Activated CD4-positive, alpha-beta T cell treated with anti-CD3 and anti-CD28 coated beads for 36 hours (primary cell): ENCODE measurements at regions of chr19 and their contacts with region 1.

Region 1: GRCh38 chr19:13277104-13277809 is 127.0 kb downstream of the IER2 start:
- DNase-seq: peak; percentile 76
- ATAC-seq: peak; percentile 96
- H3K4me3 Mint-ChIP-seq: no peak overlapping the region
- H3K27ac Mint-ChIP-seq: peak overlapping the region; percentile 86
- H3K4me1 Mint-ChIP-seq: peaks cover 13% of the 10 kb centered on the region
- H3K27me3 Mint-ChIP-seq: no peaks in the 10 kb centered on the region

Region 2: DNA sequence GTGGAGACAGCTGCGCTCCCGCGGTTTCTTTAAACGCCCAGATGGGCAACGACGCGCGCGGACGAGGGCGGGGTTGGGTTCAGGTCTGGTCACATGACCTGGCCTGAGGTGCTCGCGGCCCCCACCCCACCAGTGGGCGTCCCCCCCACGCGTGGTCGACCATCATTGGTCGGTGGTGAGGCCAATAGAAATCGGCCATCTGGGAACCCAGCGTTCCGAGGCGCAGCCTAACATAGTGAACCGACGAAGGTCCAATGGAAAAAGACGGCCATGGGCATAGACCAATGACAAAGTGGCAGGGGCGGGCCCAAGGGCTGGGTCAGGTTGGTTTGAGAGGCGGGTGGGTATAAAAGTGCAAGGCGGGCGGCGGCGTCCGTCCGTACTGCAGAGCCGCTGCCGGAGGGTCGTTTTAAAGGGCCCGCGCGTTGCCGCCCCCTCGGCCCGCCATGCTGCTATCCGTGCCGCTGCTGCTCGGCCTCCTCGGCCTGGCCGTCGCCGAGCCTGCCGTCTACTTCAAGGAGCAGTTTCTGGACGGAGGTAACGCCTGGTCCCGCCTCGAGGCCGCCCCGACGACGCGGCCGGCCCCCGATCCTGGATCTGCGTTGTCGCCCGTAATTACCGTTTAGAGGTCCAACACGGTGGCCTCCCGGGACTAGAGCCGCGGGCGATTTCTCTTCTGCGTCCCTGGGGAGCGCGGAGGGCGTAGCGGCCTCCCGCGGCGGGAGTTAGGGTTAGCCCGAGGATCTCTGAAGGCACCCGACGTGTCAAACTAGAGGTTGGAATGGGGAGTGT is 338.8 kb before region 1 on chr19 and contains the start of gene CALR:
- CTCF ChIA-PET with region 1: no interaction called
- POLR2A ChIA-PET with region 1: no interaction called
- intact Hi-C with region 1: no loop called
- DNase-seq: peak; percentile 99
- ATAC-seq: peak; percentile 89
- H3K4me3 Mint-ChIP-seq: peak within 1 kb of the TSS; percentile 99
- H3K27ac Mint-ChIP-seq: peak within 1 kb of the TSS; percentile 96
- H3K4me1 Mint-ChIP-seq: peaks cover 59% of the 10 kb centered on the region
- H3K27me3 Mint-ChIP-seq: no peaks in the 10 kb centered on the region
- total RNA-seq, gene CALR: 557 to 569 TPM

Region 3: GRCh38 chr19:13262450-13262849 is 14.8 kb before region 1 on chr19:
- CTCF ChIA-PET with region 1: interaction called, 17 read pairs
- POLR2A ChIA-PET with region 1: no interaction called
- intact Hi-C with region 1: no loop called
- DNase-seq: no peak
- ATAC-seq: peak; percentile 40
- H3K4me3 Mint-ChIP-seq: no peak overlapping the region
- H3K27ac Mint-ChIP-seq: no peak overlapping the region
- H3K4me1 Mint-ChIP-seq: peaks cover 14% of the 10 kb centered on the region
- H3K27me3 Mint-ChIP-seq: peaks cover 17% of the 10 kb centered on the region

Region 4: GRCh38 chr19:13334801-13335481 is 57.7 kb after region 1 on chr19:
- CTCF ChIA-PET with region 1: interaction called, 12 read pairs
- POLR2A ChIA-PET with region 1: no interaction called
- intact Hi-C with region 1: loop called in 1 of 2 experiments (anchors 2 kb)
- DNase-seq: peak; percentile 13
- ATAC-seq: no peak
- H3K4me3 Mint-ChIP-seq: no peak overlapping the region
- H3K27ac Mint-ChIP-seq: no peak overlapping the region
- H3K4me1 Mint-ChIP-seq: no peaks in the 10 kb centered on the region
- H3K27me3 Mint-ChIP-seq: peaks cover 19% of the 10 kb centered on the region

Region 5: DNA sequence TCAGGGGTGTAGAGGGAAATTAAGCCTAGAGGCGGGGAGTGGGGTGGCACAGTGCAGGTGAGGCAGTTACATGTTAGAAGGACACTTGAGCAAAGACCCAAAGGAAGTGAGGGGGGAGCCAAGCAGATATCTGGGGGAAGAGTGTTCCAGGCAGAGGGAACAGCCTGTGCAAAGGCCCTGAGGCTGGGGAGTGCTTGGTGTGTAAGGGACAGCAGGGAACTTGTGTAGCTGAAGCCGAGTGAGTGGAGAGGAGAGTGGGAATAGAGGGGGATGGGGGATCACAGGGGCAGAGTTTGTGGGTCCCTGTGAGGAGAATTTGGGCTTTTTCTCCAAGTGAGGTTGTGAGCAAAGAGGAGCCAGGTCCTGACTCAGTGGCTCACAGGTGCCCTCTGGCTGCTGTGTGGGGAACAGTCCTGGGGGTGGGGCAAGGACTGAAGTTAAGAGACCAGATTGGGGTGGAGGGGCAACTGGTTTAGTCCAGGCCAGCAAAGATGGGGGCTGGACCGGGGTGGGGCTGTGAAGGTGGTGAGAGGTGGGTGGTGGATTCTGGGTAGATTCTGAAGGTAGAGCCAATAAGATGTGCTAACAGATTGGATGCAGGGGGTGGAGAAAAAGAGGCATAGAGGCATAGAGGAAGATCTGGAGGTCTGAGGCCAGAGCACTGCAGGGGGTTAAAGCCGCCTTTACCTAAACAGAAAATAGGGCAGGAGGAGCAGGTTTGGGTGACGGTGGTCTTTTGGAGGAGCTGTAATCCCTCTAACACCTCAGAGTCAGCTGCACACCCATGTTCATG is 153.7 kb after region 1 on chr19:
- CTCF ChIA-PET with region 1: interaction called, 14 read pairs
- POLR2A ChIA-PET with region 1: interaction called, 3 read pairs
- intact Hi-C with region 1: loop called (anchors 1 kb)
- DNase-seq: peak; percentile 76
- ATAC-seq: peak; percentile 71
- H3K4me3 Mint-ChIP-seq: no peak overlapping the region
- H3K27ac Mint-ChIP-seq: no peak overlapping the region
- H3K4me1 Mint-ChIP-seq: no peaks in the 10 kb centered on the region
- H3K27me3 Mint-ChIP-seq: peaks cover 10% of the 10 kb centered on the region

Region 6: GRCh38 chr19:13459351-13459750 is 182.1 kb after region 1 on chr19:
- CTCF ChIA-PET with region 1: no interaction called
- POLR2A ChIA-PET with region 1: no interaction called
- intact Hi-C with region 1: no loop called
- DNase-seq: no peak
- ATAC-seq: no peak
- H3K4me3 Mint-ChIP-seq: no peak overlapping the region
- H3K27ac Mint-ChIP-seq: no peak overlapping the region
- H3K4me1 Mint-ChIP-seq: no peaks in the 10 kb centered on the region
- H3K27me3 Mint-ChIP-seq: peaks cover 8% of the 10 kb centered on the region

Region 7: DNA sequence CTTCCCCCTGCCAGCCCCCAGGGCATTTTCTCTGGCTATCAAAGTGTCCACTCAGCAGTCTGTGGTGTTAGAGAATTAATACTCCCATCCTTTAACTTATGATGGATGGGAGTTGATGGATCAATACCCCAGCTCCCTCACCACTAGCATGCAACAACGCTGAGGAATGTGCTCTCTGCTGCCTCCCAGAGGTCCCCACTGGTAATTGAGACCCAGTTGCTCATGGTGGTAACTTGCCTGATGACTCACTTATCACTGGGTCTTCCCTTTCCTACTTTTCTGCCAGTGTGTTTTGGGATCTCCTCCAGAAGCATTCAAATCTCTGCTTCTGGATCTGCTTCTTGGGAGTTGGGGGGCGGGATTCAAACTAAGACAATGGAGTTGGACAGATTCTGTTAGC is 249.3 kb after region 1 on chr19:
- CTCF ChIA-PET with region 1: no interaction called
- POLR2A ChIA-PET with region 1: no interaction called
- intact Hi-C with region 1: loop called in 1 of 2 experiments (anchors 5 kb)
- DNase-seq: peak; percentile 57
- ATAC-seq: no peak
- H3K4me3 Mint-ChIP-seq: no peak overlapping the region
- H3K27ac Mint-ChIP-seq: no peak overlapping the region
- H3K4me1 Mint-ChIP-seq: no peaks in the 10 kb centered on the region
- H3K27me3 Mint-ChIP-seq: peaks cover 37% of the 10 kb centered on the region

Region 8: GRCh38 chr19:13588957-13589833 is 311.9 kb after region 1 on chr19:
- CTCF ChIA-PET with region 1: interaction called, 33 read pairs
- POLR2A ChIA-PET with region 1: no interaction called
- intact Hi-C with region 1: loop called (anchors 1 kb)
- DNase-seq: peak; percentile 90
- ATAC-seq: peak; percentile 99
- H3K4me3 Mint-ChIP-seq: no peak overlapping the region
- H3K27ac Mint-ChIP-seq: no peak overlapping the region
- H3K4me1 Mint-ChIP-seq: no peaks in the 10 kb centered on the region
- H3K27me3 Mint-ChIP-seq: no peaks in the 10 kb centered on the region

Region 9: GRCh38 chr19:13718733-13719132 is 441.5 kb after region 1 on chr19:
- CTCF ChIA-PET with region 1: no interaction called
- POLR2A ChIA-PET with region 1: no interaction called
- intact Hi-C with region 1: loop called (anchors 1 to 5 kb)
- DNase-seq: no peak
- ATAC-seq: no peak
- H3K4me3 Mint-ChIP-seq: no peak overlapping the region
- H3K27ac Mint-ChIP-seq: no peak overlapping the region
- H3K4me1 Mint-ChIP-seq: no peaks in the 10 kb centered on the region
- H3K27me3 Mint-ChIP-seq: peaks cover 9% of the 10 kb centered on the region